Lower leg skin (tissue), 4 donors: ENCODE measurements at regions of chr19 and their contacts with region 1.

Region 1: DNA sequence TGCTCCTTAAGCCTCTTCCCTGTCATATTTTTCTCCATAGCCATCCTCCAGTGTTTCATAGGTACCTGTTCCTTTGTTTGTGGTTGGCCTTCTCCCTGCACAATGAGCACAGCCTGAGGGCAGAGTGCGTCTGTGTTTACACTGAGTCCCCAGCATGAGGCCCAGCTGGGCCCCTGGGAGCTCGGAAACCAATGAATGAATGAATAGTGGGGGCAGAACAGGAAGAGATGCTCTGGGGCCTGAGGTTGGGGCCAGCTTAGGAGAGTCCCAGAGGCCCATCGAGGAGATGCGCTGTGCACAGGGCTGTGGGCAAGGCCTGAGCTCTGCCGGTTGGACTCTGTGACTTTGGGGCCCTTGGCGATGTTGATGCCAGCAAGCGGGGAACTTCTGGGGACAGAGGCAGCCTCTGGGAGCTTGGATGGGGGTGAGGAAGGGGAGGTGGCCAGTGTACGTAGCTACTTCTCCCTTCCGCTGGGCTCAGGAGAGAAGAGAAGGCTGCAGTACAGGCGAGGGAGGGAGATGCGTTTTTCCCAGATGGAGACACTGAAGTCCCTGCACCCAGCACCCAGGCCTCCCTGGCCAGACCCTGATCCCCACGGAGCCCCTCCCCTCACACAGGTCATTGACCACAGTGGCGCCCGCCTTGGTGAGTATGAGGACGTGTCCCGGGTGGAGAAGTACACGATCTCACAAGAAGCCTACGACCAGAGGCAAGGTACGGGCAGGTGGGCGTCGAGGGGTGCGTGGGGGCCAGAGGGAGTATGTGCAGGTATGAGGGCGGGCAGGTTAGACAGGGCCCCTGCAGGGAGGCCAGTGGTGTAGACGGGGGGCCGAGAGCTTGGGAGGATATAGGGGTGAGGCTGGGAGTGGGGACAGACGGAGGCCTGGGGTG is 5.1 kb downstream of the TBCB start:
- DNase-seq: no peak
- H3K4me3 ChIP-seq: no peak overlapping the region
- CTCF ChIP-seq: no peak
- POLR2A ChIP-seq: no peak

Region 2: GRCh38 chr19:36054119-36054732 is 66.1 kb before region 1 on chr19 and contains the start of gene THAP8:
- intact Hi-C with region 1: no loop called
- DNase-seq: peak; percentile 100
- H3K4me3 ChIP-seq: peak within 1 kb of the TSS; percentile 36
- CTCF ChIP-seq: peak in 1 of 3 donors; percentile 56
- POLR2A ChIP-seq: no peak
- total RNA-seq, gene THAP8: 9.1 to 27.4 (median 9.5) TPM

Region 3: DNA sequence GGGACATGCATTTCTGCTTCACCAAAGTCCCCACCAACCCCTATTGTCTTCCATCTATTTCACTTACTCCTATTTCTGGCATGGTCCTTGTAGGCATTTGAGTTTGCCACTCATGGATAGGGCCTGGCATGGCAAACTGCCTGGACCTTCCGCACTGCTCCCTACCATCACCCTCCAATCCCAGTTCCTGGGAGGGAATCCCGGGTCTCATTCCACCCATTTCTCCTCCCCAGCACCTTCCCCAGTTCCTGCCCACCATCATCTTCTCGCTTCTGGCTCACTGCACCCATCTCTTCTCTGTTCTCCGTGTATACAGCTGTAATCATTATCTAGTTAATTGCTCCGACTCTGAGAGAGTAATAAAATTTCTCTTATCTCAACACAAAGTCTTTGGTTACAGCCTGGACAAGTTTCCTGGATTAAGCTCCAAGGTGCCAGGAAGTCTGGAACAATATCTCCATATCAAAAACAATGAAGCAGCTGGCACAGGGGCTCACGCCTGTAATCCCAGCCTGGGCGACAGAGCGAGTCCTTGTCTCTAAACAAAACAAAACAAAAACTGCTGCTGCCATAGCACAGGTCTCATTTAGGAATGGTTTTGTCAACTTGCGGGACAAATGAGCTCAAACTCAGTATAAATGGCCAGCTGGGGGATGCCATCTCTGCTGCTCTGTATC is 48.9 kb after region 1 on chr19:
- intact Hi-C with region 1: loop called (anchors 5 kb)
- DNase-seq: no peak
- H3K4me3 ChIP-seq: no peak overlapping the region
- CTCF ChIP-seq: no peak
- POLR2A ChIP-seq: no peak